ENCODE measurements at regions of chr3 and their contacts with region 1.

Region 1: GRCh38 chr3:71064288-71064955 is 519.1 kb downstream of the FOXP1 start:
- DNase-seq: peak in 8 of 9 donors; percentile 35 to 86 (median 84)
- ATAC-seq: peak; percentile 64
- H3K4me3 ChIP-seq: peak overlapping the region; percentile 74
- H3K4me3 Mint-ChIP-seq: no peak overlapping the region
- H3K27ac ChIP-seq: peak overlapping the region; percentile 82
- H3K27ac Mint-ChIP-seq: no peak overlapping the region
- H3K4me1 ChIP-seq: peaks cover 55 to 64% of the 10 kb centered on the region in 2 donors
- H3K4me1 Mint-ChIP-seq: peaks cover 47 to 69% (median 67%) of the 10 kb centered on the region in 7 donors
- H3K27me3 ChIP-seq: no peaks in the 10 kb centered on the region
- H3K27me3 Mint-ChIP-seq: no peaks in the 10 kb centered on the region

Region 2: GRCh38 chr3:70753597-70753996 is 310.8 kb before region 1 on chr3:
- CTCF ChIA-PET with region 1: no interaction called
- POLR2A ChIA-PET with region 1: no interaction called
- intact Hi-C with region 1: no loop called
- DNase-seq: no peak
- ATAC-seq: no peak
- H3K4me3 ChIP-seq: no peak overlapping the region
- H3K4me3 Mint-ChIP-seq: no peak overlapping the region
- H3K27ac ChIP-seq: no peak overlapping the region
- H3K27ac Mint-ChIP-seq: no peak overlapping the region
- H3K4me1 ChIP-seq: no peaks in the 10 kb centered on the region
- H3K4me1 Mint-ChIP-seq: no peaks in the 10 kb centered on the region
- H3K27me3 ChIP-seq: no peaks in the 10 kb centered on the region
- H3K27me3 Mint-ChIP-seq: peaks cover 0 to 19% (median under 1%) of the 10 kb centered on the region in 5 donors

Region 3: DNA sequence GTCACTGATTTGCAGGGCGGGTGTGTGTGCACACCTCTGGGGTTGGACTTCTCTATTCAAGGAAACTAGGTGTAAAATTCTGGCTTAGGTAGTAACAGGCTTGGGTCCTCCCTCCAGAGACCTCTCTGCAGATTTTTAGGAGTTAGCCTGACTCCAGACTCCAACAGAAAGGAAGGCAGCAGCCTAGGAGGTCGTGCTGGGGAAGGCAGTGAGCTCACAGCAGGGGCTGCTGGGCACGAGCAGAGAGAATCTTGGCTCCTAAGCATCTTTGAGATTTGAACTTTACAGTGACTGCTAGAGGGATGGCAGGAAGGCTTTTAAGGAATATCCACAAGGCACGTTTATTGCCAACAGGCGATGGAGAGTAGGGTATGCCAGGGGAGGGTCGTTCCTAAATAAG is 93.5 kb before region 1 on chr3:
- CTCF ChIA-PET with region 1: no interaction called
- POLR2A ChIA-PET with region 1: no interaction called
- intact Hi-C with region 1: no loop called
- DNase-seq: no peak
- ATAC-seq: no peak
- H3K4me3 ChIP-seq: no peak overlapping the region
- H3K4me3 Mint-ChIP-seq: peak overlapping the region in 1 of 10 donors; percentile 10
- H3K27ac ChIP-seq: no peak overlapping the region
- H3K27ac Mint-ChIP-seq: peak overlapping the region in 5 of 9 donors; percentile 2 to 54 (median 34)
- H3K4me1 ChIP-seq: no peaks in the 10 kb centered on the region
- H3K4me1 Mint-ChIP-seq: peaks cover 0 to 13% (median 3%) of the 10 kb centered on the region in 7 donors
- H3K27me3 ChIP-seq: no peaks in the 10 kb centered on the region
- H3K27me3 Mint-ChIP-seq: no peaks in the 10 kb centered on the region

Region 4: GRCh38 chr3:71006810-71007785 is 57.3 kb before region 1 on chr3:
- CTCF ChIA-PET with region 1: interaction called, 15 read pairs
- POLR2A ChIA-PET with region 1: interaction called, 7 read pairs
- intact Hi-C with region 1: loop called (anchors 1 kb)
- DNase-seq: peak in 5 of 9 donors; percentile 25 to 45 (median 40)
- ATAC-seq: peak; percentile 54
- H3K4me3 ChIP-seq: no peak overlapping the region
- H3K4me3 Mint-ChIP-seq: peak overlapping the region in 5 of 10 donors; percentile 34 to 62 (median 49)
- H3K27ac ChIP-seq: peak overlapping the region; percentile 74
- H3K27ac Mint-ChIP-seq: peak overlapping the region in 8 of 9 donors; percentile 40 to 91 (median 87)
- H3K4me1 ChIP-seq: peaks cover 20 to 49% of the 10 kb centered on the region in 2 donors
- H3K4me1 Mint-ChIP-seq: peaks cover 35 to 84% (median 75%) of the 10 kb centered on the region in 7 donors
- H3K27me3 ChIP-seq: no peaks in the 10 kb centered on the region
- H3K27me3 Mint-ChIP-seq: no peaks in the 10 kb centered on the region

Region 5: DNA sequence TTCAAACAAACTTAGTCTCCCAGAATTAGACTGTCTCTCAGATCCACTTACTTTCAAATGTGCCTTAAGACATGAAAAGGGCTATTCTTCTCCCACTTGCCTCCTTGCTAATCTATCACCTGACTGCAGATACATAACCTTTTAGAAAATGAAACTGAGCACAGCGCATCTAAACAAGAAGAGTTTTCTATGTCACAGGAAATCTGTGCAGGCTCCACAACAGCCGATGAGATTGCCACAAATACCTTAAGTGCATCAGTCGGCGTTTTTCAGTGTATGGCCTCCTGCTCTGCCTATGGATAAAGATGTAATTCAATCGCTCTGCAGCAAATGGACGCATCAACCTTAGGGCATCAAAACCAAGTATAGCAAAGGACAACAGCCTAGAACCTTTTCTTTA is 25.1 kb before region 1 on chr3:
- CTCF ChIA-PET with region 1: interaction called, 4 read pairs
- POLR2A ChIA-PET with region 1: interaction called, 4 read pairs
- intact Hi-C with region 1: loop called in 1 of 2 experiments (anchors 1 kb)
- DNase-seq: peak in 6 of 9 donors; percentile 39 to 61 (median 48)
- ATAC-seq: peak; percentile 85
- H3K4me3 ChIP-seq: no peak overlapping the region
- H3K4me3 Mint-ChIP-seq: peak overlapping the region; percentile 28 to 79 (median 67)
- H3K27ac ChIP-seq: peak overlapping the region; percentile 16
- H3K27ac Mint-ChIP-seq: peak overlapping the region; percentile 66 to 91 (median 81)
- H3K4me1 ChIP-seq: peaks cover 15 to 55% of the 10 kb centered on the region in 2 donors
- H3K4me1 Mint-ChIP-seq: peaks cover 45 to 99% (median 90%) of the 10 kb centered on the region in 7 donors
- H3K27me3 ChIP-seq: no peaks in the 10 kb centered on the region
- H3K27me3 Mint-ChIP-seq: no peaks in the 10 kb centered on the region

Region 6: GRCh38 chr3:71087143-71088018 is 23.0 kb after region 1 on chr3:
- CTCF ChIA-PET with region 1: interaction called, 5 read pairs
- POLR2A ChIA-PET with region 1: interaction called, 8 read pairs
- intact Hi-C with region 1: loop called (anchors 1 kb)
- DNase-seq: peak in 8 of 9 donors; percentile 39 to 76 (median 58)
- ATAC-seq: peak; percentile 79
- H3K4me3 ChIP-seq: peak overlapping the region; percentile 7
- H3K4me3 Mint-ChIP-seq: peak overlapping the region; percentile 39 to 78 (median 70)
- H3K27ac ChIP-seq: peak overlapping the region; percentile 42
- H3K27ac Mint-ChIP-seq: peak overlapping the region; percentile 43 to 98 (median 92)
- H3K4me1 ChIP-seq: peaks cover 34 to 69% of the 10 kb centered on the region in 2 donors
- H3K4me1 Mint-ChIP-seq: peaks cover 61 to 94% (median 89%) of the 10 kb centered on the region in 7 donors
- H3K27me3 ChIP-seq: no peaks in the 10 kb centered on the region
- H3K27me3 Mint-ChIP-seq: no peaks in the 10 kb centered on the region

Region 7: GRCh38 chr3:71226565-71227269 is 162.3 kb after region 1 on chr3:
- CTCF ChIA-PET with region 1: no interaction called
- POLR2A ChIA-PET with region 1: no interaction called
- intact Hi-C with region 1: loop called (anchors 1 to 2 kb)
- DNase-seq: peak; percentile 34 to 89 (median 65)
- ATAC-seq: peak; percentile 86
- H3K4me3 ChIP-seq: peak overlapping the region; percentile 48
- H3K4me3 Mint-ChIP-seq: peak overlapping the region; percentile 51 to 85 (median 79)
- H3K27ac ChIP-seq: peak overlapping the region; percentile 59
- H3K27ac Mint-ChIP-seq: peak overlapping the region; percentile 85 to 97 (median 90)
- H3K4me1 ChIP-seq: peaks cover 21 to 64% of the 10 kb centered on the region in 2 donors
- H3K4me1 Mint-ChIP-seq: peaks cover 30 to 91% (median 88%) of the 10 kb centered on the region in 7 donors
- H3K27me3 ChIP-seq: no peaks in the 10 kb centered on the region
- H3K27me3 Mint-ChIP-seq: peaks cover 0 to 52% (median 0%) of the 10 kb centered on the region in 5 donors

Region 8: GRCh38 chr3:71397046-71397445 is 332.6 kb after region 1 on chr3:
- CTCF ChIA-PET with region 1: no interaction called
- POLR2A ChIA-PET with region 1: no interaction called
- intact Hi-C with region 1: loop called in 1 of 2 experiments (anchors 10 kb)
- DNase-seq: no peak
- ATAC-seq: no peak
- H3K4me3 ChIP-seq: peak overlapping the region; percentile 3
- H3K4me3 Mint-ChIP-seq: peak overlapping the region in 9 of 10 donors; percentile 54 to 80 (median 73)
- H3K27ac ChIP-seq: peak overlapping the region; percentile 86
- H3K27ac Mint-ChIP-seq: peak overlapping the region in 8 of 9 donors; percentile 81 to 98 (median 92)
- H3K4me1 ChIP-seq: peaks cover 39 to 79% of the 10 kb centered on the region in 2 donors
- H3K4me1 Mint-ChIP-seq: peaks cover 23 to 95% (median 84%) of the 10 kb centered on the region in 7 donors
- H3K27me3 ChIP-seq: no peaks in the 10 kb centered on the region
- H3K27me3 Mint-ChIP-seq: peaks cover 0 to 52% (median 0%) of the 10 kb centered on the region in 5 donors

Region 9: GRCh38 chr3:72830452-72831217 is 1766.2 kb after region 1 on chr3:
- CTCF ChIA-PET with region 1: no interaction called
- POLR2A ChIA-PET with region 1: no interaction called
- intact Hi-C with region 1: no loop called
- DNase-seq: no peak
- ATAC-seq: no peak
- H3K4me3 ChIP-seq: no peak overlapping the region
- H3K4me3 Mint-ChIP-seq: no peak overlapping the region
- H3K27ac ChIP-seq: no peak overlapping the region
- H3K27ac Mint-ChIP-seq: peak overlapping the region in 3 of 9 donors; percentile 15 to 54 (median 23)
- H3K4me1 ChIP-seq: no peaks in the 10 kb centered on the region
- H3K4me1 Mint-ChIP-seq: peaks cover 0 to 21% (median 12%) of the 10 kb centered on the region in 7 donors
- H3K27me3 ChIP-seq: no peaks in the 10 kb centered on the region
- H3K27me3 Mint-ChIP-seq: no peaks in the 10 kb centered on the region

Measured in naive thymus-derived CD4-positive, alpha-beta T cell (primary cell).